ENCODE measurements at regions of chr19 and their contacts with region 1.

Region 1: GRCh38 chr19:19138169-19138981 is at the start of gene TMEM161A:
- DNase-seq: peak; percentile 96 to 98
- ATAC-seq: peak; percentile 99 to 100
- H3K4me3 ChIP-seq: peak within 1 kb of the TSS; percentile 80 to 90 (median 88)
- H3K27ac ChIP-seq: peak within 1 kb of the TSS; percentile 90 to 98 (median 94)
- H3K4me1 ChIP-seq: peaks cover 7 to 14% of the 10 kb centered on the region in 2 donors
- H3K27me3 ChIP-seq: no peaks in the 10 kb centered on the region
- CTCF ChIP-seq: no peak
- POLR2A ChIP-seq: peak; percentile 90 to 96
- total RNA-seq, gene TMEM161A: 30.1 to 52.1 (median 42.8) TPM

Region 2: GRCh38 chr19:19033426-19034203 is 104.8 kb before region 1 on chr19 and contains the starts of genes ARMC6 and SUGP2:
- in situ Hi-C with region 1: no loop called
- intact Hi-C with region 1: loop called (anchors 1 kb)
- DNase-seq: peak; percentile 62 to 80
- ATAC-seq: peak; percentile 88 to 91
- H3K4me3 ChIP-seq: peak within 1 kb of the TSS; percentile 69 to 96 (median 73)
- H3K27ac ChIP-seq: peak within 1 kb of the TSS; percentile 89 to 100 (median 94)
- H3K4me1 ChIP-seq: peaks cover 22 to 40% of the 10 kb centered on the region in 2 donors
- H3K27me3 ChIP-seq: no peaks in the 10 kb centered on the region
- CTCF ChIP-seq: peak in 3 of 5 experiments; percentile 19 to 46 (median 39)
- POLR2A ChIP-seq: peak; percentile 80 to 83
- total RNA-seq, gene ARMC6: 18.2 to 35.7 (median 25.2) TPM
- total RNA-seq, gene SUGP2: 24.6 to 38.2 (median 32.8) TPM

Region 3: DNA sequence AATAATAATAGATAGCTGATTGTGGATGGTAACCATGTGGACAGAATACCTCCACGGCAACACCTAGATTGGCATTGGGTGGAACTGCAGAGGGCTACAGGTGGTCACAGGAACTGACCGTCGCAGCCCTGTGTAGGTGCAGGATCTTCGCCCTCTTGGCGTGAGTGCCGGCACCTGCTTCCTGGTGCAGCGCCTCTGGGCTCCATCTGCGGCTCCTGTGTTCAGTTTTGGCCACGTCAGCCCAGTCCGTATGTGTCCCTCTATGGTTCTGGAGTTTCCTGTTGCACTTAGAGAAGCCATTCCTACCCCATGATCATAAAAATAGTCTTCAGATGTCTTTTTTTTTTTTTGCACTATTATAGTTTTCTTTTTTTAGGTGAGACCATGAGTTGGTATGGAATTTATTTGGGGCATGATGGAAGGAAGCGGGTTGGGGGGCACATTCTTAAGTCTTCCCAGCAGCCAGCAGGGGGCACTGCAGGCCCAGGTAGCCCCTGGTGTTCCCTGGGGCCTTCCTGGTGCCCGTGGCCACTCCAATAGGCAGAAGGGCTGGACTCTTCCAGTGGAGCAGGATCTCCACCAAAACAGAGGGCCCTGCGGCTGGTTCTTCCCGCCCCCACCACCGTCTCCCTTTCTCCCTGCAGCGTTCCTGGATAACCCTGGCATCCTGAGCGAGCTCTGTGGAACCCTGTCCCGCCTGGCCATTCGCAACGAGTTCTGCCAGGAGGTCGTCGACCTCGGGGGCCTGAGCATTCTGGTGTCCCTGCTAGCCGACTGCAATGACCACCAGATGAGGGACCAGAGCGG is 84.7 kb before region 1 on chr19:
- in situ Hi-C with region 1: loop called (anchors 5 to 10 kb)
- intact Hi-C with region 1: loop called (anchors 1 kb)
- DNase-seq: peak in 1 of 2 donors; percentile 71
- ATAC-seq: peak; percentile 77 to 82
- H3K4me3 ChIP-seq: no peak overlapping the region
- H3K27ac ChIP-seq: no peak overlapping the region
- H3K4me1 ChIP-seq: peaks cover under 1 to 3% of the 10 kb centered on the region in 2 donors
- H3K27me3 ChIP-seq: no peaks in the 10 kb centered on the region
- CTCF ChIP-seq: peak; percentile 79 to 93 (median 91)
- POLR2A ChIP-seq: no peak

Region 4: GRCh38 chr19:19063183-19064097 is 74.9 kb before region 1 on chr19 and contains the start of gene SLC25A42:
- in situ Hi-C with region 1: loop called in 2 of 4 experiments (anchors 5 to 10 kb)
- intact Hi-C with region 1: no loop called
- DNase-seq: peak; percentile 99 to 100
- ATAC-seq: peak; percentile 71 to 84
- H3K4me3 ChIP-seq: peak within 1 kb of the TSS; percentile 70 to 85 (median 78)
- H3K27ac ChIP-seq: peak within 1 kb of the TSS; percentile 94 to 96 (median 94)
- H3K4me1 ChIP-seq: peaks cover 78% of the 10 kb centered on the region in 2 donors
- H3K27me3 ChIP-seq: no peaks in the 10 kb centered on the region
- CTCF ChIP-seq: peak in 1 of 5 experiments; percentile 10
- POLR2A ChIP-seq: peak; percentile 96 to 97
- total RNA-seq, gene SLC25A42: 12.3 to 85.3 (median 37.1) TPM

Region 5: DNA sequence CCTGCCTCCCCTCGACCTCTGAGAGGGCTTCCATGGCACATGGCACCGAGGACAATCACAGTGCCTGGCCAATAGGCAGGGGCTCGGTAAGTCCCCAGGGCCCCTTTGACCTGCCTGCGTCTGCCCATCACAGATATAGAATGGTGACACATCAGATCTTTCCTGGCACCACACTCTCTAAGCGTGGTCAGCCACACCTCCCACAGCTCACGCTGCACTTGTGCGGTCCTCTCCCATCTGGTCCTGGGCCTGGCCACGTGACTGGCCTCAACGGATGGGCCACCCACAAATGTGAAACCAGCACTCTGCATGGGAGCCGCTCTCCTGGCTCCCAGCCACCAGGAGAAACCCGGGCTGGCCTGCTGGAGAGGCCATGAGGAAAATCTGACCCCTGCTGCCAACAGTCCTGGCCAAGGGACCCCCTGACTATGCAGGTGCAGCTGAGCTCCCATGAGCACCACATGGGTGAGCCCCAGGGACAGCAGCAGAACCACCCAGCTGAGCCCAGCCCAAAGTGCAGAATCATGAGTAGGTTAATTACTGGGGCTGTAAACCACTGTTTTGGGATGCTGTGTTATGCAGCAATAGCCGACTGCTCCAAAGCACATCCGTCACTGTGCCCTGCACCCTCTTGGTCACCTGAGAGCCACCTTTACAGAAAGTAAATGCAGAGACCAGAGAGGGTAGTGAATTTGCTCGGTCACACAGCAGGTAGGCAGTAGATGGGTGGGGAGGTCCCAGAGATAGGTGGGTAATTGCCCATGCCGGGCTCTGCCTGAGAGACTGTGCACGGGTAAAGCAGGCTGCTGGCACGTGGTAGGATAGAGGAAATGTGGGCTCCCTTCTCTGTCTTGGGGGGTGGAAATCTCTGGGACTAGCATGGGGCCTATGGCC is 41.4 kb after region 1 on chr19:
- in situ Hi-C with region 1: loop called in 1 of 4 experiments (anchors 5 kb)
- intact Hi-C with region 1: no loop called
- DNase-seq: no peak
- ATAC-seq: peak in 1 of 2 donors; percentile 56
- H3K4me3 ChIP-seq: no peak overlapping the region
- H3K27ac ChIP-seq: no peak overlapping the region
- H3K4me1 ChIP-seq: no peaks in the 10 kb centered on the region
- H3K27me3 ChIP-seq: no peaks in the 10 kb centered on the region
- CTCF ChIP-seq: no peak
- POLR2A ChIP-seq: no peak

Region 6: DNA sequence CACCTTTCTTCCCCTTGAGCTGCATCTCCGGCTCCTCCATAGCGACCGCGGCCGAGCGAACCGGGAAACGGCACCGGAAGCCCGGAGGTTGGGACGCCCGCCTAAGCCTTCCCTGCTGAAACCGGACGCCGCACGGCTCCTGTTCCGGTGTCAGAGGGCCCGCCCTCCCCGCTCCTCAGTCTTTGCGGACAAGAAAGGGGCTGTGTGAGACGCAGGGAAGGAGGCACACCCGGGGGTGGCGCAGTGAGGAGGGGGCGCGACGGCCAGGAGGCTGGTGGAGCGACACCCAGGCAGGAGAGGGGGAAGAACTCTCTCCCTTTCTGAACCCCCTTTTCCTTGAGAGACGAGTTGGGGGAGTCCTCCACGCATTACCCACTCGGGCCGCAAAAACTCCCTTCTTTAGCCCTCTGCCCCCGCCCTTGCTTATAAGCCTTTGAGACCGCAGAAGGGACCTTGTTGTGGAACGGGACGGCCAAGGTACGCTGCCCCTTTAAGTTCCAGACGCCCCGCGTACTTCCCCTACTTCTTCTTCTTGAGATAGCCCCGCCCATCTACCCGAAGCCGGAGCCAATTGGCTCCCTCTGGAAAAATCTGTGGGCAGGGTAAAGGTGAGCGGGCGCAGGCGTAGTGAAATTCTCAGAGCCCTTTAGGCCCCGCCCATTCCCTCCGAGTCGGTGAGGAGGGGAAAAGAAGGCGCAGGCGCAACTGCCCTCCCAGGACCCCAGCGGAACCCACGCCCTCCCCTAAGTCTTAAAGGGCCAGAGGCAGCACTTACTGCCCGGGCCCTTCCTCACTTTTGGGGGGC is 53.9 kb after region 1 on chr19 and contains the starts of genes BORCS8 and RFXANK:
- in situ Hi-C with region 1: no loop called
- intact Hi-C with region 1: loop called (anchors 5 kb)
- DNase-seq: peak; percentile 99 to 100
- ATAC-seq: peak; percentile 98 to 100
- H3K4me3 ChIP-seq: peak within 1 kb of the TSS; percentile 83 to 99 (median 92)
- H3K27ac ChIP-seq: peak within 1 kb of the TSS; percentile 99 to 100 (median 100)
- H3K4me1 ChIP-seq: peaks cover 30 to 44% of the 10 kb centered on the region in 2 donors
- H3K27me3 ChIP-seq: no peaks in the 10 kb centered on the region
- CTCF ChIP-seq: peak in 2 of 5 experiments; percentile 9 to 18
- POLR2A ChIP-seq: peak; percentile 67 to 79
- total RNA-seq, gene BORCS8: 11.2 to 17.2 (median 13.3) TPM
- total RNA-seq, gene RFXANK: 25.5 to 44.1 (median 35.1) TPM

Region 7: DNA sequence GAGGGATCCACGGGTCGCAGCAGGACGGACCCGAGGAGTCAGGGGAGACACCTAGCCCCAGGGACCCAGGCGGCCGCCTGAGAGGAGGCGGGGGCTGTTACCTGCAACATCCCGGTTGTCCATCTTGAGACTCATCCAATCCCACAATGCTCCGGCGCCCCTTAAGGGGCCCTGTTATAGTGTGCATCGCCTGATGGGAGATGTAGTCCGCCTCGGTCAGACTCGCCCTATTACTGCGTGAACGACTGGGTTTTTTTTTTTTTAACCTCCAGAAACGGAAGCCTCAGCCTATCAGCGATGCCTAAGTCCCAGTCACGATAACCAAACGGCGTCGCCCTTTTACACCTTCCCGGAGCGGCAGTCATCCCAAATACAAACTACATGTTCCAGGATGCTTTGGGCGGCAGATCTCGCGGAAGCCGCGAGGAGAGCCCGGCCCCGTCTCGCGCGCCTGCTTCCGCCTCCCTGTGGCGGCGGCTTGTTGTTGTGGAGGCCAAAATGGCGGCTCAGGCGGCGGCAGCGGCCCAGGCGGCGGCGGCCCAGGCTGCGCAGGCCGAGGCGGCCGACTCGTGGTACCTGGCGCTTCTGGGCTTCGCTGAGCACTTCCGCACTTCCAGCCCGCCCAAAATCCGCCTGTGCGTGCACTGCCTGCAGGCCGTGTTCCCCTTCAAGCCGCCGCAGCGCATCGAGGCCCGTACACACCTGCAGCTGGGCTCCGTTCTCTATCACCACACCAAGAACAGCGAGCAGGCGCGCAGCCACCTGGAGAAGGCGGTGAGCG is 182.2 kb after region 1 on chr19 and contains the starts of genes MAU2 and SUGP1:
- in situ Hi-C with region 1: no loop called
- intact Hi-C with region 1: loop called (anchors 2 kb)
- DNase-seq: peak; percentile 83 to 87
- ATAC-seq: peak; percentile 88 to 97
- H3K4me3 ChIP-seq: peak within 1 kb of the TSS; percentile 80 to 96 (median 93)
- H3K27ac ChIP-seq: peak within 1 kb of the TSS; percentile 88 to 98 (median 92)
- H3K4me1 ChIP-seq: peaks cover 48 to 57% of the 10 kb centered on the region in 2 donors
- H3K27me3 ChIP-seq: no peaks in the 10 kb centered on the region
- CTCF ChIP-seq: peak in 4 of 5 experiments; percentile 43 to 62 (median 48)
- POLR2A ChIP-seq: peak; percentile 28 to 75
- total RNA-seq, gene MAU2: 31.3 to 48.5 (median 41.7) TPM
- total RNA-seq, gene SUGP1: 29.7 to 51.0 (median 39.8) TPM

Region 8: GRCh38 chr19:19514215-19514633 is 375.8 kb after region 1 on chr19:
- in situ Hi-C with region 1: no loop called
- intact Hi-C with region 1: no loop called
- DNase-seq: peak; percentile 38 to 48
- ATAC-seq: no peak
- H3K4me3 ChIP-seq: peak overlapping the region; percentile 28 to 46 (median 32)
- H3K27ac ChIP-seq: no peak overlapping the region
- H3K4me1 ChIP-seq: peaks cover 20 to 29% of the 10 kb centered on the region in 2 donors
- H3K27me3 ChIP-seq: no peaks in the 10 kb centered on the region
- CTCF ChIP-seq: no peak
- POLR2A ChIP-seq: no peak

Region 9: DNA sequence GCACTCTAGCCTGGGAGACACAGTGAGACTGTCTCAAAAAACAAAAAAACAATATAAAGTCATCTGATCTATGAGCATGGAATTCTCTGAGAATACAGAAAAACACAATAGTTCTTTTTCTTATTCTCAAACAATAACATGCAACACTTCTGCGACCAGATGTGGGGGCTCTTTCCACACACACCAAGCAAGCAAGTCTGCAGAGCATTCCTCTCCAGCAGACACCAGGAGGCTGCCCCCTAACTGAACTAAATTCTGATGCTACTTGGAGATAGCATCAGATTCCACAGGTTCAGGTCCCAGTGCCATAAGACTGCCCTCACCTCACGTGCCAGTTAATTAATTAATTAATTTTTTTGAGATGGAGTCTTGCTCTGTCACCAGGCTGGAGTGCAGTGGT is 558.0 kb after region 1 on chr19:
- in situ Hi-C with region 1: no loop called
- intact Hi-C with region 1: no loop called
- DNase-seq: no peak
- ATAC-seq: no peak
- H3K4me3 ChIP-seq: no peak overlapping the region
- H3K27ac ChIP-seq: no peak overlapping the region
- H3K4me1 ChIP-seq: no peaks in the 10 kb centered on the region
- H3K27me3 ChIP-seq: no peaks in the 10 kb centered on the region
- CTCF ChIP-seq: no peak
- POLR2A ChIP-seq: no peak

Measured in gastrocnemius medialis (tissue), 4 donors.